Posterior vena cava (tissue), 2 donors: ENCODE measurements at regions of chr4 and their contacts with region 1.

Region 1: DNA sequence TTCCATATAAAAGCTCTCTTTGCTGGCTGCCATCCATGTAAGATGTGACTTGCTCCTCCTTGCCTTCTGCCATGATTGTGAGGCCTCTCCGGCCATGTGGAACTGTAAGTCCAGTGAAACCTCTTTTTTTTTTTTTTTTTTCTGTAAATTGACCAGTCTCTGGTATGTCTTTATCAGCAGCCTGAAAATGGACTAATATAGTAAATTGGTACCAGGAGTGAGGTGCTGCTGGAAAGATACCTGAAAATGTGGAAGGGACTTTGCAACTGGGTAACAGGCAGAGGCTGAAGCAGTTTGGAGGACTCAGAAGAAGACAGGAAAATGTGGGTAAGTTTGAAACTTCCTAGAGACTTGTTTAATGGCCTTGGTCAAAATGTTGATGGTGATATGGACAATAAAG is 124.3 kb upstream of the AADAT start:
- DNase-seq: no peak

Region 2: DNA sequence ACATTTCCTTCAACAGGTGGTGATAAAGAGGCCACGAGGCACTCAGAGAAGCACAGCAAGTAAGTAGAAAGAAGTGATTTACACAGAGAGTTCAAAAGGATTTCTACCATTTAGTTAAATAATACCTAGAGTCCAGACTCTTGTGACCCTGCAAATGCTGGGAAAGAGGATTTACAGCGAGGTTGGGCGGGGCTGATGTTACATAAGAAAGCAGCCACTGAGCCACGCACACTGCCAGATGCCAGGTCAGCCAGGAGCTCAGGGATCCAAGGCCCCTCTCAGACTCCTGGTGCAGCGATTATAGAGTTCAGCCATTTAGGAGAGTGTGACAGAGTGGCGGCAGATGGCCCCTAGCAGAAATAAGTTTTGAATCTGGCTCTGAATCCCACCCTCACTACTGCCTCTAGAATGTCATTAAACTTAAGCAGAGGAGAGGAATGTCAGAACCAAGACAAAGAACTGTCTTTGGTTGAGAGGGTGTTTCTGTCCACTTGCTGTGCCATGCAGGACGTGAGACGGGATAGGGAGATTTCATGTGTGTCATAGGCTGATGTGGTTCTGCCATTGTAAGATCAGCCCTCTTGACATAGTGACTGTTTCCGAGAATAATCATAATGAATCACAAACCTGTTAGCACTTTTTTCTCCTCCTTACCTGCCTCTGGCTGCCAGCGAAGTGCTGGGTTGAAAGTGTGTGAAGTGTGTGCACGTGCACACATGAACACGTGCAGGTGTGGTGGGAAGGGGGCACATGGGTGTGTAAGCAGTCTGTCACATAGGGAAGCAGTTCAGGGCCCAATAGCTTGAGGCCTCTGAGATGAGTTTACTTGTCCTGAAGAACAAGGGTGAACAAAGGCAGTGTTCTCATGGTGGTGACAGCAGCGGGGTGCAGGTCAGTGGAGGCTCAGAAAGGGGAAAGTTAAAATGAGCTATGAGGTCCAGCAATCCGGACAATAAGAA is 238.0 kb before region 1 on chr4:
- intact Hi-C with region 1: no loop called
- DNase-seq: no peak

Region 3: DNA sequence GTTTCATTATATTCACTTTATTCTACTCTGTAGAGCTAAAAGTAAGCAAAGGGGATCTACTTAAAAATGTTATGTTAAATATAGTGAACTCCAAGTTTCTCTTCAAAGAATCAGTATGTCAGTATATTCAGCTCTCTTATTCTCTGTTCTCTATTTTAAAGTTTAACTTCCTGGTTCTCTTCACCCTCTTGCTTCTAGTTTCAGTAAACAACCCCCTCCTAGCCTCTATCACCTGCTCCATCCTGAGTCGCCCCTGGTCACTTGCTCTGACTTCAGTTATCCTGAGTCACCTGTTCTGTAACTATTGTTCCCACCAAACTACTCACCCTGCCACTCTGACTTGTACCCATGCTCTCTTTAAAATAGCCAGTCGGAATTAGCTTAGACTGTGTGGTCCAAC is 56.5 kb after region 1 on chr4:
- intact Hi-C with region 1: loop called in 1 of 2 experiments (anchors 2 kb)
- DNase-seq: no peak